ENCODE measurements at regions of chr11 and their contacts with region 1.

Region 1: GRCh38 chr11:62787005-62787759 is at the start of gene TMEM179B:
- DNase-seq: peak; percentile 99
- total RNA-seq, gene TMEM179B: 23.7 to 33.0 TPM

Region 2: GRCh38 chr11:62831520-62832335 is 44.5 kb after region 1 on chr11 and contains the start of gene STX5:
- intact Hi-C with region 1: loop called in 1 of 2 experiments (anchors 10 kb)
- DNase-seq: peak; percentile 100
- total RNA-seq, gene STX5: 32.8 to 34.0 TPM

Region 3: DNA sequence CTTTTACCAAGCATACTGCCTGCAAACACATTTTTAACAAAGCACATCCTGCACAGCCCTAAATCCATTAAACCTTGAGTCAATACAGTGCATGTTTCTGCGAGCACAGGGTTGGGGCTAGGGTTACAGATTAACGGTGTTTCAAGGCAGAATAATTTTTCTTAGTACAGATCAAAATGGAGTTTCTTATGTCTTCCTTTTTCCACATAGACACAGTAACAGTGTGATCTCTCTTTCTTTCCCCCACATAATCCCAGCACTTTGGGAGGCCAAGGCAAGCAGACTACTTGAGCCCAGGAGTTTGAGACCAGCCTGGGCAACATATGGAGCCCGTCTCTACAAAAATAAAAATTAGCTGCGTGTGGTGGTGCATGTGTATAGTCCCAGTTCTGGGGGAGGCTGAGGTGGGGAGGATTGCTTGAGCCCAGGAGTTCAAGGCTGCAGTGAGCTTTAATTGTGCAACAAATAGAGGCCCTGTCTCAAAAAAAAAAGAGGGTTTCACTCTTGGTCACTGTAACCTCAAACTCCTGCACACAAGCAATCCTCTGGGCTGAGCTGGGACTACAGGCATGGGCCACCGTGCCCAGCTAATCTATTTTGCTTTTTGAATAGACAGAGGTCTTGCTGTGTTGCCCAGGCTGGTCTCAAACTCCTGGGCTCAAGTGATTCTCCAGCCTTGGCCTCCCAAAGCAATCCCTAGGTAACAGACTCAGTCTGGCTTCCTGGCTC is 73.8 kb after region 1 on chr11:
- intact Hi-C with region 1: loop called (anchors 5 to 10 kb)
- DNase-seq: peak; percentile 24